ENCODE measurements at regions of chr10 and their contacts with region 1.

Region 1: DNA sequence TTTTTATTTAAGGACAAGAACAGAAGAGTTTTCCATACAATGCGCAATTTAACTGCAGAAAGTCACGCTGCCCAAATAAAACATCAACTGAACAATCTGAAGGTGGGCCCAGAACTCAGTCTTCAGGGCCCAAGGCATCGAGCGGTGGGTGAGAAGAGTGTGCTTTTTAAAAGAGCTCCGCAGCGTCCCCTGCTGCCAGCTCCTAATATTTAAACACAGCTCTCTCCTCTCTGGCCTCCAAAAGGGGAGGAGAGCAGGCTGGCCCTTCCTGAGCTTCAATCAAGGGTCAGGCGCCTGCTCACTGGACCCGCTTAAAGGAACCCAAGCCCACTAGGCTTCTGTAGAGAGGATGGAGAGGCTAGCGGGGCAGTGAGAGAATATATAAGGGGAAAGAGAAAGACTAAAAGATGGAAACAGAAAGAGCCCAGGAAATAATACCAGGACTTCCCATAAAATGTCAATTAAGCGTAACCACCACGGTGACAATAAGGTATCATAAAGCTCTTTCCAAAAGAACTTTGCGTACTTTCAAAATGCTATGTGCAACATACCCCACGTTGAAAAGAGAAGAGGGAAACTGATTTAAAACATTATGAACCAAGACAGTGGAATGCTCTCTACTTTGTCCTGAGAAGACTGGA is 2.8 kb downstream of the FAM53B start:
- DNase-seq: peak; percentile 61 to 72 (median 71)
- H3K4me3 ChIP-seq: peak overlapping the region in 4 of 7 experiments; percentile 27 to 86 (median 58)
- H3K27ac ChIP-seq: no peak overlapping the region
- H3K4me1 ChIP-seq: peaks cover 17 to 74% (median 45%) of the 10 kb centered on the region in 4 experiments
- H3K27me3 ChIP-seq: no peaks in the 10 kb centered on the region

Region 2: GRCh38 chr10:124539935-124540641 is 201.3 kb before region 1 on chr10:
- CTCF ChIA-PET with region 1: interaction called, 112 read pairs
- POLR2A ChIA-PET with region 1: no interaction called
- DNase-seq: peak; percentile 52 to 68 (median 65)
- H3K4me3 ChIP-seq: no peak overlapping the region
- H3K27ac ChIP-seq: no peak overlapping the region
- H3K4me1 ChIP-seq: peaks cover 1 to 21% (median 18%) of the 10 kb centered on the region in 4 experiments
- H3K27me3 ChIP-seq: no peaks in the 10 kb centered on the region

Region 3: DNA sequence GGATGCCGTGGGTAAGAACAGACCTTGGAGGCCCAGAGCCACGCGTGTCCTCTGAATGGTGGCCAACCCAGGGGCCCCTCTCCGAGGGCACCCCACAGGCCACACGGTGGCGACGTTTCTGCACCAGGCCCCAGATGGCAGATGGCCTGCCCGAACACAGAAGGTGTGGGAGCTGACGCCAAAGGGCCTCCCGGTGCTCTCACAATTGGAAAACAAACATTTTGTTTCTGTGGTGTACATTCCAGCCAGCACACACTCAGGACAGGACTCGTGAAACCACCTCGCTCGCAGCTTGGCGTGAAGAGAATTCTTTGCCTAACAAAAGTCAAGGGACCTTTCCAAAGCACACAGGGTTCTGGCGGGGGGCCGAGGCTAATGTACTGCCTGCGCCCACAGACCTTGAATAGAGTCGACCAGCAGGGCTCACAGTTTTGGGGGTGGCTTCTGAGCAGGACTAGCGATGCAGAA is 109.3 kb before region 1 on chr10:
- CTCF ChIA-PET with region 1: interaction called, 35 read pairs
- POLR2A ChIA-PET with region 1: no interaction called
- DNase-seq: peak; percentile 40 to 52 (median 52)
- H3K4me3 ChIP-seq: no peak overlapping the region
- H3K27ac ChIP-seq: no peak overlapping the region
- H3K4me1 ChIP-seq: peaks cover 2 to 49% (median 32%) of the 10 kb centered on the region in 4 experiments
- H3K27me3 ChIP-seq: no peaks in the 10 kb centered on the region

Region 4: GRCh38 chr10:124659380-124659779 is 82.0 kb before region 1 on chr10:
- CTCF ChIA-PET with region 1: interaction called, 14 read pairs
- POLR2A ChIA-PET with region 1: no interaction called
- DNase-seq: no peak
- H3K4me3 ChIP-seq: no peak overlapping the region
- H3K27ac ChIP-seq: no peak overlapping the region
- H3K4me1 ChIP-seq: peaks cover 0 to 34% (median 15%) of the 10 kb centered on the region in 4 experiments
- H3K27me3 ChIP-seq: no peaks in the 10 kb centered on the region

Region 5: GRCh38 chr10:124703778-124704427 is 37.5 kb before region 1 on chr10:
- CTCF ChIA-PET with region 1: interaction called, 43 read pairs
- POLR2A ChIA-PET with region 1: no interaction called
- DNase-seq: no peak
- H3K4me3 ChIP-seq: no peak overlapping the region
- H3K27ac ChIP-seq: no peak overlapping the region
- H3K4me1 ChIP-seq: peaks cover 6 to 73% (median 37%) of the 10 kb centered on the region in 4 experiments
- H3K27me3 ChIP-seq: no peaks in the 10 kb centered on the region

Region 6: GRCh38 chr10:124728071-124728829 is 13.2 kb before region 1 on chr10:
- CTCF ChIA-PET with region 1: interaction called, 78 read pairs
- POLR2A ChIA-PET with region 1: no interaction called
- DNase-seq: peak in 2 of 3 donors; percentile 82 to 87
- H3K4me3 ChIP-seq: no peak overlapping the region
- H3K27ac ChIP-seq: no peak overlapping the region
- H3K4me1 ChIP-seq: peaks cover 22 to 45% (median 35%) of the 10 kb centered on the region in 4 experiments
- H3K27me3 ChIP-seq: no peaks in the 10 kb centered on the region